Stomach (tissue), 19 donors: ENCODE measurements at regions of chr1 and their contacts with region 1.

Region 1: DNA sequence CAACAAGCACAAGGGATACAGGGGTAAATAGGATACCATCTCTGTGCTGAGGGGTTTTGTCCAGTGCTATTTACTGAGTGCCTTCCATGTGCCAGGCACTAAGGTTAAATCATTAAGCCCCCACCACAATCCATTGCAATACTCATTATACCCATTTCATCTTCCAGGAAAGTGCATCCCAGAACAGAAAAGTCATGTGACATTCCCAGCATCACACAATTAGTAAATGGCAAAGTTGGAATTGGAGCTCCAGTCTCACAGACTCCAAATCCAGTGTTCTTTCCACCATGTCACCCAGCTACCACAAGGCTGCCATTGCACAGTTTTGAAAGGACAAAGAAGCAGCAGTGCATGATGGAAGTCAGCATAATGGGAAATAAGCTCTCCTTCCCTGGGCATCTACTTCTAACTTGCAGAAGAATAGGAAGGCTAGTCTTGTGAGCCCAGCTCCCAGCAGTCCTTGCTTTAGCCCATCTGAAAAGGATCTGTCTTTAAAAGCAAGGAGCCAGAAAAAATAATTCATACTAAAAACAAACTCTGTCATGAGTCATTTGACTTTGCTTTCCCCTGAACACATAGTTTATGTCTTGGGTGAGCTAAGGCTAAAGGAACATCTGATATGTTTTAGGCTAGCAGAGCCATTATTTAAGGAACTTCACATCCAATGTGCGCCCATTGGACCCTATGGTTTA is 111.4 kb upstream of the HOOK1 start:
- DNase-seq: peak in 1 of 2 donors; percentile 56
- H3K4me3 ChIP-seq: no peak overlapping the region
- H3K27ac ChIP-seq: peak overlapping the region in 4 of 5 donors; percentile 34 to 77 (median 74)
- H3K4me1 ChIP-seq: peaks cover 25 to 69% (median 52%) of the 10 kb centered on the region in 4 donors
- H3K27me3 ChIP-seq: no peaks in the 10 kb centered on the region
- CTCF ChIP-seq: no peak
- EP300 ChIP-seq: no peak
- POLR2A ChIP-seq: no peak

Region 2: GRCh38 chr1:58739856-58740466 is 963.4 kb before region 1 on chr1:
- intact Hi-C with region 1: loop called (anchors 5 kb)
- DNase-seq: peak in 1 of 2 donors; percentile 79
- H3K4me3 ChIP-seq: no peak overlapping the region
- H3K27ac ChIP-seq: no peak overlapping the region
- H3K4me1 ChIP-seq: peaks cover 0 to 8% (median 5%) of the 10 kb centered on the region in 4 donors
- H3K27me3 ChIP-seq: no peaks in the 10 kb centered on the region
- CTCF ChIP-seq: peak in 5 of 7 experiments; percentile 61 to 82 (median 75)
- EP300 ChIP-seq: no peak
- POLR2A ChIP-seq: no peak